Activated naive CD4-positive, alpha-beta T cell treated with anti-CD3 and anti-CD28 coated beads for 36 hours (primary cell): ENCODE measurements at regions of chr12 and their contacts with region 1.

Region 1: GRCh38 chr12:27243804-27244683 is at the start of gene STK38L:
- DNase-seq: peak; percentile 98
- H3K4me3 Mint-ChIP-seq: peak within 1 kb of the TSS; percentile 98
- H3K27ac Mint-ChIP-seq: peak within 1 kb of the TSS; percentile 91
- H3K4me1 Mint-ChIP-seq: peaks cover 47% of the 10 kb centered on the region
- H3K27me3 Mint-ChIP-seq: no peaks in the 10 kb centered on the region
- total RNA-seq, gene STK38L: 21.3 to 21.4 TPM

Region 2: DNA sequence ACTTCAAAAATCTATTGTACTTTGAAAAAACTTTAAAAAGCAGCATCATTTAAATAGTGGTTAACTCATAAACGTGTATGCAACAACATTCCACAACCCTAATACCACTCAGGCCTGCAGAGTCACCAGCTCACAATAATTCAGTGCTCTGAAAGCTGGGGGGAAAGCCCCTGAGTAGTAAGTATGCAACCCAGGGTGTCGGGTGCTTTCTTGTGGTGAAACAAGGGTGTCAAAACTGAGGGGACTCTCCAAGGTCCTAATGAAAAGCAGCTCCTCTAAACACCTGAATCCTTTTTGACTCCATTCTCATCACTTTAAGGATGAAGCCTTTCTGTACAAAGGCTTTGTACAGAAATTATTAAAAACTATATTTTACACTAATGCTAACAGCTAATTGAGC is 272.1 kb before region 1 on chr12:
- CTCF ChIA-PET with region 1: no interaction called
- intact Hi-C with region 1: loop called (anchors 1 kb)
- DNase-seq: peak; percentile 92
- H3K4me3 Mint-ChIP-seq: no peak overlapping the region
- H3K27ac Mint-ChIP-seq: no peak overlapping the region
- H3K4me1 Mint-ChIP-seq: peaks cover 9% of the 10 kb centered on the region
- H3K27me3 Mint-ChIP-seq: no peaks in the 10 kb centered on the region

Region 3: DNA sequence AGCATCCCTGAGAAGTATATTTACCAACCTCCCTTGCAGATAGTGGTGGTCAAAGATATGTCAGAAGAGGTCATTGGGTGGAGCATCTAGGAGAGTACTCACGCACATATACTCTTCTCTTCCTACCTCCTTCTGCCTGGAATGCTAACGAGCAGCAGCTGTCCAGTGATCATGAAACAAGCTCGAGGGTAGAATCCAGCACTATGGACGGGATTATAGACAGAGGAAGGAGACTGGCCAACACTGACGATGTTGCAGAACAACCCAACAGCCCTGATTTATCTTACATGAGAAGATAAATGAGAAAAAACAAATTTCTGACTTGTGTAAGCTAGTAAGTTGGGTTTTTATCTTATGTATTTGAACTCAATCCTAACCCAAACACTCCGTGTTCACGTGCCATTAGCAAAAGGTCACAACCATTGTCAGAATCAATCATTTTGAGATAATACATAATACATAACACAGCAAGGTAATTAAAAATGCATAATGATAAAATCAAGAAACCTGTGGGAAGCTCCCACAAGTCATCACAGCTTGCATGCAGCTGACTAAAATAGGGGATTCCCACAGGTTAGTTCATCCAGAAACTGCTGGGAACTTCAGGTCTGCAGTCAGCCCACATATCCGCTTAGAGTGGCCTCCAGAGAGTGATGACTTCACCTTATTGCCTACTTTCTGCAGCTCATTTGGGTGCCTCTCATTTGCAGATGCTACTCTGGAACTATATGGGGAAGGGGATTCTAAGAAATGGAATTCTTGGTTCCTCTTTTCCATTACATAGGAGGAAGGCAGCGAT is 36.2 kb before region 1 on chr12:
- CTCF ChIA-PET with region 1: no interaction called
- intact Hi-C with region 1: loop called (anchors 1 kb)
- DNase-seq: peak; percentile 74
- H3K4me3 Mint-ChIP-seq: no peak overlapping the region
- H3K27ac Mint-ChIP-seq: peak overlapping the region; percentile 38
- H3K4me1 Mint-ChIP-seq: peaks cover 19% of the 10 kb centered on the region
- H3K27me3 Mint-ChIP-seq: no peaks in the 10 kb centered on the region

Region 4: DNA sequence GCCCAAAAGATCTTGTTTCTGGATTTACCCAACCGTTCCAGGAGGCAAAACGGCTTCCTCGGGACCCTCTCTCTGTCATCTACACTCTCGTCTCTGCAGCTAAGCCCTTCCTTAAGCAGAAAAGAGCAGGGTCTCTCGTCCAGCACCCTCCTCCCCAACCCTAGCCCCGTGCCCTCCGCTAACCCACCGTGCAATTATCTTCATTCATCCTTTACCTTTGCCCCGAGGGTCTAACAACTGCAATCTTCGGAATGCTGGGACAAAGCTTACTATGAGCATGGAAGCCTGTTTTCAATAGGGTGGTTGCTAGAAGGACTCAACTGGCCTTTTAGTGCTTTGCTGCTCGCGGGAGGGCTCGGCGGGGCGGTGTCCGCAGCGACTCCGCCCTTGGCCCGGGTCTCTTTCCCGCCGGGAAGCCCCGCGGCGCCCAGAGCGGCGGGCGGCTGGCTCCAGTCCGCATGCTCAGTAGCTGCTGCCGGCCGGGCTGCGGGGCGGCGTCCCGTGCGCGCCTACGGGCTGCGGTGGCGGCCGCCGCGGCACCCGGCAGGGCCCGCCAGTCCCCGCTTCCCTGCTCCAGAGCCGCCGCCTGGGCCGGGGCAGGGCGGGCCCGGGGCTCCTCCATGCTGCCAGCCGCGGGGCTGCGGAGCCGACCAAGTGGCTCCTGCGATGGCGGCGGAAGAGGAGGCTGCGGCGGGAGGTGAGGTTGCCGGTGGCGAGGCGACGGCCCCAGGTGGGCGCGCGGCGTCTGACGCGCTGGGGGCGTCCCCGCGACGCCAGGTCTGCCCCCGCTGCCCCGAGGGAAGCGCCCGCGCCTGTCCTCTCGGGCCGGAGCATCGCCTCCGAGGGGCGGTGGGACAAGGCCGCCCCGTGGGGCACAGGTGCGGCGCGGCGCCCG is 88.6 kb after region 1 on chr12 and contains the start of gene BMAL2:
- CTCF ChIA-PET with region 1: no interaction called
- intact Hi-C with region 1: loop called (anchors 2 kb)
- DNase-seq: peak; percentile 44
- H3K4me3 Mint-ChIP-seq: peak within 1 kb of the TSS; percentile 90
- H3K27ac Mint-ChIP-seq: peak within 1 kb of the TSS; percentile 74
- H3K4me1 Mint-ChIP-seq: peaks cover 34% of the 10 kb centered on the region
- H3K27me3 Mint-ChIP-seq: peaks cover 30% of the 10 kb centered on the region
- total RNA-seq, gene BMAL2: 7.9 to 9.2 TPM